ENCODE measurements at regions of chr7 and their contacts with region 1.

Region 1: DNA sequence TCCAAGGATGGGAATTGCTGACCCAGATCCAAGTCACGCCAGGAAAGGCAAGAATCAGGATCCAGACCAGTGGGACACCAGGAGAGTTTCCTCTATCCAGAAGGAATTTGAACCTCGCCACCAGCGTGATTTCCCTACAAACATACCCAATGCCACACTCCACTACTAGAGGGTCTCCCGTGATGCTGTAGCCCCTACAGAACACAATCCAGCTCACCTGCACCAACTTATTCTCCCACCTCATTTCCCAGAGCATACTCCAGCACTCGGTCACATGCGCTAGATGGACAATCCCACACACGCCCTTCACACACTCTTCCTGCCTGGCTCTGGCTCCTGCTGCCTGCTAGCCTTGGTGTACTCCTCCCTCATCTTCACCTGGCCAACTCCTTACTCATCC is 142.1 kb upstream of the PDE1C start:
- DNase-seq: no peak
- ATAC-seq: no peak
- H3K4me3 ChIP-seq: no peak overlapping the region
- H3K4me3 Mint-ChIP-seq: no peak overlapping the region
- H3K27ac ChIP-seq: no peak overlapping the region
- H3K27ac Mint-ChIP-seq: no peak overlapping the region
- H3K4me1 ChIP-seq: no peaks in the 10 kb centered on the region
- H3K4me1 Mint-ChIP-seq: no peaks in the 10 kb centered on the region
- H3K27me3 ChIP-seq: no peaks in the 10 kb centered on the region
- H3K27me3 Mint-ChIP-seq: peaks cover 6% of the 10 kb centered on the region
- CTCF ChIP-seq: no peak

Region 2: GRCh38 chr7:31957090-31957720 is 255.1 kb before region 1 on chr7:
- CTCF ChIA-PET with region 1: no interaction called
- POLR2A ChIA-PET with region 1: no interaction called
- intact Hi-C with region 1: no loop called
- DNase-seq: no peak
- ATAC-seq: no peak
- H3K4me3 ChIP-seq: no peak overlapping the region
- H3K4me3 Mint-ChIP-seq: no peak overlapping the region
- H3K27ac ChIP-seq: no peak overlapping the region
- H3K27ac Mint-ChIP-seq: no peak overlapping the region
- H3K4me1 ChIP-seq: no peaks in the 10 kb centered on the region
- H3K4me1 Mint-ChIP-seq: no peaks in the 10 kb centered on the region
- H3K27me3 ChIP-seq: no peaks in the 10 kb centered on the region
- H3K27me3 Mint-ChIP-seq: no peaks in the 10 kb centered on the region
- CTCF ChIP-seq: no peak

Region 3: DNA sequence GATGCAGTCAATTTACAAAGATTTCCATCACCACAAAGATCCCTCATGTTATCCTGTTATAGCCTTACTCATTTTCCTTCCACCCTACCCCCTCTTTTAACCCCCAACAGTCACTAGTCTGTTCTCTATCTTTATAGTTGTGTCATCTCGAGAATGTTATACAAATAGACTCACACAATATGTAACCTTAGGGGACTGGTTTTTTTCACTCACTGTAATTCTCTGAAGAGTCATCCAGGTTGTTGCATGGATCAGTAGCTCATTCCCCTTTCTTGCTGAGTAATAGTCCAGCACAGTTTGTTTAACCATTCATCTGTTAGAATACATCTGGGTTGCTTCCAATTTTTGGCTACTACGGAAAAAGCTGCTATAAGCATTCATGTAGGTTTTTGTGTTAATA is 21.0 kb before region 1 on chr7:
- CTCF ChIA-PET with region 1: no interaction called
- POLR2A ChIA-PET with region 1: no interaction called
- intact Hi-C with region 1: no loop called
- DNase-seq: no peak
- ATAC-seq: no peak
- H3K4me3 ChIP-seq: no peak overlapping the region
- H3K4me3 Mint-ChIP-seq: no peak overlapping the region
- H3K27ac ChIP-seq: no peak overlapping the region
- H3K27ac Mint-ChIP-seq: no peak overlapping the region
- H3K4me1 ChIP-seq: no peaks in the 10 kb centered on the region
- H3K4me1 Mint-ChIP-seq: no peaks in the 10 kb centered on the region
- H3K27me3 ChIP-seq: no peaks in the 10 kb centered on the region
- H3K27me3 Mint-ChIP-seq: no peaks in the 10 kb centered on the region
- CTCF ChIP-seq: no peak

Region 4: GRCh38 chr7:32275216-32275979 is 63.1 kb after region 1 on chr7:
- CTCF ChIA-PET with region 1: no interaction called
- POLR2A ChIA-PET with region 1: no interaction called
- intact Hi-C with region 1: no loop called
- DNase-seq: peak in 1 of 14 experiments; percentile 7
- ATAC-seq: no peak
- H3K4me3 ChIP-seq: no peak overlapping the region
- H3K4me3 Mint-ChIP-seq: no peak overlapping the region
- H3K27ac ChIP-seq: no peak overlapping the region
- H3K27ac Mint-ChIP-seq: no peak overlapping the region
- H3K4me1 ChIP-seq: no peaks in the 10 kb centered on the region
- H3K4me1 Mint-ChIP-seq: no peaks in the 10 kb centered on the region
- H3K27me3 ChIP-seq: no peaks in the 10 kb centered on the region
- H3K27me3 Mint-ChIP-seq: no peaks in the 10 kb centered on the region
- CTCF ChIP-seq: no peak

Region 5: DNA sequence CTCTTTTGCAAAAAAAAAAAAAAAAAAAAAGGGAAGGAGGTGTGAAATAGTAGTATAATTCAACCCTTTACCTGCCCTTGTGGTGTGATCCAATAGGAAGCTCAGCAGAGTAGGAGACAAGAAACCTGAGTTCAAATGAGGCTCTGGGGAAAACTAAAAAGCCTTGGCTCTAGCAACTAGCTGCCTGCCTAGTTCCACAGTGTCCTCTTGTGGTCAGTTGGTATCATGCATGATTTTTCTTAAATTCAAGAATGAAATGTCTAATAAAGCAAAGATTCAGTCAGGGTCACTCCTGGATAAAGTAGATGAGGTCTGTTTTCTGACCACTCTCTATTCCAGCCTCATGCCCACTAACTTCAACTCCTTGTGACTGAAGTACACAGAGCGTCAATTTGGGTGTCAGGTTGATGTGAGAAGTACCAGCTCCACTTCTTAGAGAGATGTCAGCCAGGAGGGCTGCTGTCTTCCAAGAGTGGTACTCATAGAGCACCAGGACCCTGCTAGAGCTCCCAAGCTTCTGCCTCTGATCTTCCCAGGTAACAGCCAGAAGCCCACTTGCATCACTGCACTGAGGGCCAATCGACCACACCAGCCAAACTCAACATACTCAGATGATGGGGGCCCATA is 267.4 kb after region 1 on chr7:
- CTCF ChIA-PET with region 1: no interaction called
- POLR2A ChIA-PET with region 1: no interaction called
- intact Hi-C with region 1: loop called in 1 of 2 experiments (anchors 5 kb)
- DNase-seq: peak in 4 of 14 experiments; percentile 5 to 45 (median 24)
- ATAC-seq: no peak
- H3K4me3 ChIP-seq: no peak overlapping the region
- H3K4me3 Mint-ChIP-seq: no peak overlapping the region
- H3K27ac ChIP-seq: no peak overlapping the region
- H3K27ac Mint-ChIP-seq: no peak overlapping the region
- H3K4me1 ChIP-seq: no peaks in the 10 kb centered on the region
- H3K4me1 Mint-ChIP-seq: no peaks in the 10 kb centered on the region
- H3K27me3 ChIP-seq: no peaks in the 10 kb centered on the region
- H3K27me3 Mint-ChIP-seq: no peaks in the 10 kb centered on the region
- CTCF ChIP-seq: peak; percentile 35

Measured in CD4-positive, alpha-beta T cell (primary cell).